Right lobe of liver (tissue), 6 donors: ENCODE measurements at regions of chr11 and their contacts with region 1.

Region 1: GRCh38 chr11:86440305-86440716 is 65.6 kb downstream of the CCDC81 start:
- DNase-seq: no peak
- ATAC-seq: peak in 3 of 4 donors; percentile 33 to 34 (median 33)
- H3K4me3 ChIP-seq: no peak overlapping the region
- H3K27ac ChIP-seq: no peak overlapping the region
- H3K4me1 ChIP-seq: no peaks in the 10 kb centered on the region
- H3K27me3 ChIP-seq: no peaks in the 10 kb centered on the region
- CTCF ChIP-seq: no peak
- POLR2A ChIP-seq: no peak

Region 2: GRCh38 chr11:86818466-86819192 is 378.3 kb after region 1 on chr11:
- intact Hi-C with region 1: loop called in 1 of 2 experiments (anchors 10 kb)
- DNase-seq: no peak
- ATAC-seq: peak; percentile 61 to 87 (median 81)
- H3K4me3 ChIP-seq: no peak overlapping the region
- H3K27ac ChIP-seq: no peak overlapping the region
- H3K4me1 ChIP-seq: no peaks in the 10 kb centered on the region
- H3K27me3 ChIP-seq: no peaks in the 10 kb centered on the region
- CTCF ChIP-seq: peak; percentile 68 to 80 (median 76)
- POLR2A ChIP-seq: no peak

Region 3: DNA sequence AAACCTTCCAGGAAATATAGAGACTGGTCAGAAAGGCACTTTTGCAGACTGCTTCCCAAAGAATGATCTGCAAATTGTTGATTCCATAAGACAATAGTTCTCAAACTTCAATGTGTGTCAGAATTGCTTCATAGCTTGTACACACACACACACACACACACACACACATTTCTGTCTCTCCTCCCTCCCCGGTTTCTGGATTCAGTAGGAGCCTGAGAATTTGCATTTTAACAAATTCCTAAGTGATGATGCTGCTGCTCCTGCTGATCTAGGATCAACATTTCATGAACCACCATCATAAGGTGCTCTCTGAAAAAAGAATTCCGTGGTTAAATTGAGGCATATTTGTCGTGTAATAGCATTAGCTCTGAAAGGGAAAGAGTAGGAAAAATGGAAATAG is 550.2 kb after region 1 on chr11:
- intact Hi-C with region 1: no loop called
- DNase-seq: no peak
- ATAC-seq: no peak
- H3K4me3 ChIP-seq: no peak overlapping the region
- H3K27ac ChIP-seq: no peak overlapping the region
- H3K4me1 ChIP-seq: no peaks in the 10 kb centered on the region
- H3K27me3 ChIP-seq: no peaks in the 10 kb centered on the region
- CTCF ChIP-seq: no peak
- POLR2A ChIP-seq: no peak